ENCODE measurements at regions of chr2 and their contacts with region 1.

Region 1: DNA sequence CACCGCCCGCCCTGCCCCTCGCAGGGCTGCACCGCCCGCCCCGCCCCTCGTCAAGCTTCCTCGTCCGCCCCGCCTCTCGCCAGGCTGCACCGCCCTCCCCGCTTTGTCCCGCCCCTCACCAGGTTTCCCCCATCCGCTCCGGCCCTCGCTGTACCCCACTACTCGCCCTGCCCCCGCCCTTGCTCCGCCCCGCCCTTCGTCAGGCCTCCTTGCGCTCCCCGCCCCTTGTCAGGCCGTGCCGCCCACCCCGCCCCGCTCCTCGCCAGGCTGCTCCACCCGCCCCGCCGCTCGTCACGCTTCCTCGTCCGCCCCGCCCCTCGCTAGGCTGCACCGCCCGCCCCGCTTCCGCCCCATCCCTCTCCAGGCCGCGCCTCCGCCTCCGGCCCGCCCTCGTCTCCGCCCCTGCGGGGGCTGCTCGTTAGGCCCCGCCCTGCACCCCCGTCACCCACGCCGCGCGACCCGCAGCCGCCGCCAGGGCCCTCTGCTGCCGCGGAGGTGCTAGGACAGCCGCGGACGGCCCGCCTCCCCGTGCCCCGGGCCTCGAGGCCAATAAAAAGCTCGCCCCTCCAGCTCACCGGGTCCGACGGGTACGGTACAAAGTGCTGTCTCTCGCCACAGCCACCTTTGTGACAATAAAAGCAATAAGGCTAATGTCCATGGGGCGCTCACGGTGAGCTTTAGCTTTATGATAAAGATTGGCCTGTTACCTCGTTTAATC is 574 bp upstream of the DNPEP start:
- DNase-seq: peak; percentile 99
- ATAC-seq: peak; percentile 86 to 90 (median 88)
- H3K4me3 ChIP-seq: peak overlapping the region; percentile 86
- H3K27ac ChIP-seq: peak overlapping the region; percentile 91
- H3K4me1 ChIP-seq: peaks cover 5% of the 10 kb centered on the region
- H3K27me3 ChIP-seq: no peaks in the 10 kb centered on the region
- CTCF ChIP-seq: peak; percentile 67

Region 2: GRCh38 chr2:219160186-219161017 is 227.9 kb before region 1 on chr2 and contains the start of gene NHEJ1:
- intact Hi-C with region 1: loop called in 1 of 2 experiments (anchors 10 kb)
- DNase-seq: peak; percentile 98 to 99
- ATAC-seq: peak; percentile 95 to 97 (median 96)
- H3K4me3 ChIP-seq: peak within 1 kb of the TSS; percentile 86
- H3K27ac ChIP-seq: peak within 1 kb of the TSS; percentile 93
- H3K4me1 ChIP-seq: peaks cover 5% of the 10 kb centered on the region
- H3K27me3 ChIP-seq: no peaks in the 10 kb centered on the region
- CTCF ChIP-seq: peak; percentile 99
- total RNA-seq, gene NHEJ1: 11.5 to 18.5 (median 13.4) TPM

Region 3: GRCh38 chr2:219278655-219279516 is 109.4 kb before region 1 on chr2 and contains the start of gene DNAJB2:
- intact Hi-C with region 1: loop called in 1 of 2 experiments (anchors 5 kb)
- DNase-seq: peak; percentile 99 to 100
- ATAC-seq: peak; percentile 91 to 93 (median 92)
- H3K4me3 ChIP-seq: peak within 1 kb of the TSS; percentile 92
- H3K27ac ChIP-seq: peak within 1 kb of the TSS; percentile 98
- H3K4me1 ChIP-seq: peaks cover 30% of the 10 kb centered on the region
- H3K27me3 ChIP-seq: no peaks in the 10 kb centered on the region
- CTCF ChIP-seq: no peak
- total RNA-seq, gene DNAJB2: 93.1 to 173 (median 117) TPM

Region 4: DNA sequence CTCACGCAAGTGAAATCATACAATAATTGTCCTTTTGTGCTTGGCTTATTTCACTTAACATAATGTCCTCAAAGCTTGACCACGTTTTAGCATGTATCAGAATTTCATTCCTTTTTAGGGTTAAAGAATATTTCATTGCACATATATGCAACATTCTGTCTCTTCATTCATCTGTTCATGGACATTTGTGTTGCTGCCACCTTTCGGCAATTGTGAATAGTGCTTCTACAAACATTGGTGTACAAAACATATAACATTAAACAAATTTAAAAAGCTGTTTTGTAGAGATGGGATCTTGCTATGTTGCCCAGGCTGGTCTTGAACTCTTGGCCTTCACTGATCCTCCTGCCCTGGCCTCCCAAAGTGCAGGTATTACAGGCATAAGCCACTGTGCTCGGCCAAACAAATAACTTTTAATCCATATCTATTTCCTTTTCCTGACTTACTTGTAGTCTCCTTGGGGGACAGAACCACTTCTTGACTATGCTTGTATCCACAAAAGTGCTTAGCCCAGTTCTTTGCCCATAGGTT is 448.4 kb after region 1 on chr2:
- intact Hi-C with region 1: no loop called
- DNase-seq: no peak
- ATAC-seq: no peak
- H3K4me3 ChIP-seq: no peak overlapping the region
- H3K27ac ChIP-seq: no peak overlapping the region
- H3K4me1 ChIP-seq: no peaks in the 10 kb centered on the region
- H3K27me3 ChIP-seq: no peaks in the 10 kb centered on the region
- CTCF ChIP-seq: peak; percentile 35

Measured in psoas muscle (tissue), 8 donors.